Endothelial cell of umbilical vein (primary cell): ENCODE measurements at regions of chr3 and their contacts with region 1.

Region 1: DNA sequence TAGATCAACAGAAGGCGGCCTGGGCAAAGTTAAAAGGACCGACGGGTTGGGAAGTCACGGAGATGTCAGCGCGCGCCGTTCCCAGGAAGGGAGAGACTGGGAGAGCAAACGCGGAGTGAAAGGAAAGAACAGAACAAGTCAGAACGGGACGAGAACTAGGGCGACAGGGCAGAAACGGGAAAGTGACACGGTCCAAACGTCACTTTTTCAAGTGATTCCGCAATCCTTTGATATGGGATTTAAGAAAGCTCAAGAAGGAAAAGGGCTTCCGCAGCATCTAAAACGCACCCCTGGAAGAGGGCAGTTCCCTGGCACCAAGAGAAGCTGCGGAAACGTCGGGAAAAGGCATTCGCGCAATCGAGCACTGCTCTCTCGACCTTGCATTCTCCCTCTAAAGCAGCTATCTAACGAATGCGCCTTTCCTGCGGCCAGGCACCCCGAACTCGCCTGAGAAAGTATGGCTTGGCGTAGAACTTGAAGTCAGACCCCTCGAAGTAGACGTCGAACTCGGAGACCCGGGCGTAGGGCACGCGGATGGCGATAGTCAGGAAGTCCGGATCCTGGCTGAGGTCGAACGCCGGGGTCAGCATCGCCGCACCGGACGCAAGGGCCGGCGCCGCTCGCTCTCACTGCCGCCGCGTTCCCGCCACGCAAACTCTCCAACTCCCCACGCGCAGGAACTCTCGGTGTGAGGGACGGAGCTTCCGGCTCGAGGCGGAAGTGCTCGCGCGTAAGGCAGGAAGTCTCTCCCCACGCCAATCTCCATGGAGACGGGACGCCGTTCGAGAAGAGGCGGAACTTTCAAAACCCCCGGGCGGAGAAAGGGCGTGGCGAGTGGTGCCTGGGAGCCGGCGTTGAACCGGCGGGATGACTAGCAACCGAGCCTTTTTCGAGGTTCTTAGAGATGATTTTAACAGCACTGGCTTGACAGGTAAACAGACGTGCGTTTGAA is at the start of gene SHQ1:
- DNase-seq: peak; percentile 93
- H3K4me3 ChIP-seq: peak within 1 kb of the TSS; percentile 46 to 77 (median 76)
- H3K27ac ChIP-seq: peak within 1 kb of the TSS; percentile 4
- H3K4me1 ChIP-seq: peaks cover 16% of the 10 kb centered on the region
- H3K27me3 ChIP-seq: no peaks in the 10 kb centered on the region
- CTCF ChIP-seq: no peak
- POLR2A ChIP-seq: peak; percentile 67
- total RNA-seq, gene SHQ1: 19.7 and 20.6 TPM in 2 replicates

Region 2: DNA sequence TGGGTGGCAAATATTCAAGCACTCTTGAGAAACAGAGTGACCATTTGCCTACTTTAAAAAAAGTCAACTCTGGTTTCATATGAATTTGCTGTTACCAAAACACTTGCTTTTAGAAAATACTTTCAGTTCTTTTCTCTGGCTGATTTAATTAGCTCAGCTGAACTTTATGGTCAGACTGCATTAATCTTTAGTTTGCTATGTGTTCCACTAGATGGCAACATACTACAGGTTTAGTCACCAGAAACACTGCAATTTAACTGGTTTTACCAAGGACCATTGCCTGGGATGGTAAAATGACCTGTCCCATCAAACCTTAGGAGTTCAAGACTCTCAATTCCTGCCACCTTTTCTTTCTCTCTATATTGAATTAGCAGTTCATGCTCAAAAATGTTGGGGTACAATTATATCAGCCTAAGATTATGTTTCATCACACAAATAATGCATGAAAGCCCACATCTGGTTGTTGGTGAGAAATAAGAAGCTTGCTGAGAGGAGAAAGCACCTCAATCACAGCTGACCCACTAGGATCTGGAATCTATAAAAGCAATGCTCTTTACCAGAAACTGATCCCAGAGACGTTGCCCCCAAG is 1137.0 kb before region 1 on chr3:
- CTCF ChIA-PET with region 1: interaction called, 13 read pairs
- POLR2A ChIA-PET with region 1: no interaction called
- dilution Hi-C with region 1: no loop called
- intact Hi-C with region 1: no loop called
- DNase-seq: peak; percentile 51
- H3K4me3 ChIP-seq: no peak overlapping the region
- H3K27ac ChIP-seq: no peak overlapping the region
- H3K4me1 ChIP-seq: no peaks in the 10 kb centered on the region
- H3K27me3 ChIP-seq: peaks cover 0 to 4% of the 10 kb centered on the region in 2 experiments
- CTCF ChIP-seq: peak; percentile 37 to 49
- POLR2A ChIP-seq: no peak

Region 3: DNA sequence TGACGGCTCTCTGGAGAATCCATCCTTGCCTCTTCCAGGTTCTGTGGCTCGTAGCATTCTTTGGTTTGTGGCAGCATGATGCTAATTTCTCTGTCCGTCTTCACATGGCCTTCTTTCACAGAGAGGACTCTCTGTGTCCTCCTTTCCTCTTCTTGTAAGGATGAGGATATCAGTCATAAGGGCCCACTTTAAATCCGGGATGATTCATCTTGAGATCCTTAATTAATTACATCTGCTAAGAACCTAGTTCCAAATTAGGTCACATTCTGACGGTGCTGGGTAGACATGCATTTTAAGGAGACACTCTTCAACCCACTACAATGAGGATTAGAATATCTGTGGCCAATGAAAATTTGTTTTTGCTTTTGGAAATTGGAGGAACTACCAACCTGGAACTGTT is 24.2 kb after region 1 on chr3:
- CTCF ChIA-PET with region 1: interaction called, 13 read pairs
- POLR2A ChIA-PET with region 1: no interaction called
- dilution Hi-C with region 1: no loop called
- intact Hi-C with region 1: no loop called
- DNase-seq: no peak
- H3K4me3 ChIP-seq: no peak overlapping the region
- H3K27ac ChIP-seq: no peak overlapping the region
- H3K4me1 ChIP-seq: no peaks in the 10 kb centered on the region
- H3K27me3 ChIP-seq: peaks cover 3 to 5% of the 10 kb centered on the region in 2 experiments
- CTCF ChIP-seq: no peak
- POLR2A ChIP-seq: no peak

Region 4: DNA sequence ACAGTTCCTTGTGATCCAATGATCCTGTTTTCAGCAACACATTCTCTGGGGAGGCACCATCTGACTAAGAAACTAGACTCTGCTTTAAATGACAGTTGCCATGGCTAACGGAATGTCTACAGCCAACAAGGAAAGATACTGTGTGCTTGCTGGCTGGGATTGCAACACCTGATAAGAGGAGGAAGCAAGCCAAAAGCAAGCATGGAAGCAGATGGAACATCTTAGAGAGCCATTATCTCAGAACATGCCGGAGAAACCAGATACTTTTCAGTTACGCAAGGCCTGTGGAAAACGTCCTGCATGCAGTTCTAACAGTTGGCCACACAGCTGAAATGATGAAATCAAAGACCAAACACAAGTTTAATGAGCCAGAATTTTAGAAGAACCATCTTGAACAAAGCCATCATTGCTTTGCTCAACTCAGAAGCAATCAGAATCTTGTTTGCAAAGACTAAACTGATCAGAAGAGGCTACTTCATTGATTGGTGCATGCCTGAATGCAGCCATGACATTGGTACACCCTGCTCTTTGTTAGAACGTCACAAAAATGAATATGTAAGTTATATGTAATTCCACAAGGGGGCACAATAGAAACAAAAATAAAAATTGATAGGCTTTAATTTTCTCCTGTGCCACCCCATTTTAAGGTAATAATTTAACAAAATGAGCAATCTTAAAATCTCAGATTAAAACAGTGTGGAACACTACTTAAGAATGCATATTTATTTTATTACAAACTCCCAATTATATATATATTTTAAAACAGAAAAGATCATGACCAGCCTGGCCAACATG is 90.6 kb after region 1 on chr3:
- CTCF ChIA-PET with region 1: interaction called, 14 read pairs
- POLR2A ChIA-PET with region 1: no interaction called
- dilution Hi-C with region 1: no loop called
- intact Hi-C with region 1: loop called (anchors 5 kb)
- DNase-seq: peak; percentile 68
- H3K4me3 ChIP-seq: no peak overlapping the region
- H3K27ac ChIP-seq: no peak overlapping the region
- H3K4me1 ChIP-seq: no peaks in the 10 kb centered on the region
- H3K27me3 ChIP-seq: peaks cover 0 to 4% of the 10 kb centered on the region in 2 experiments
- CTCF ChIP-seq: peak in 1 of 2 donors; percentile 33
- POLR2A ChIP-seq: no peak

Region 5: GRCh38 chr3:73056014-73056844 is 208.2 kb after region 1 on chr3:
- CTCF ChIA-PET with region 1: interaction called, 80 read pairs
- POLR2A ChIA-PET with region 1: no interaction called
- dilution Hi-C with region 1: no loop called
- intact Hi-C with region 1: loop called (anchors 1 kb)
- DNase-seq: peak; percentile 46
- H3K4me3 ChIP-seq: no peak overlapping the region
- H3K27ac ChIP-seq: no peak overlapping the region
- H3K4me1 ChIP-seq: peaks cover 4% of the 10 kb centered on the region
- H3K27me3 ChIP-seq: no peaks in the 10 kb centered on the region
- CTCF ChIP-seq: peak in 1 of 2 donors; percentile 4
- POLR2A ChIP-seq: no peak